ENCODE measurements at regions of chr15 and their contacts with region 1.

Region 1: GRCh38 chr15:65028921-65029735 is at the start of gene MTFMT:
- DNase-seq: peak; percentile 88 to 97
- ATAC-seq: peak; percentile 65 to 83
- H3K4me3 ChIP-seq: peak within 1 kb of the TSS; percentile 73
- H3K27ac ChIP-seq: peak within 1 kb of the TSS; percentile 93 to 96
- H3K4me1 ChIP-seq: peaks cover 32% of the 10 kb centered on the region
- CTCF ChIP-seq: peak; percentile 18; the same call in 1 of the 3 replicates
- EP300 ChIP-seq: no peak
- POLR2A ChIP-seq: peak; percentile 99
- RAD21 ChIP-seq: no peak
- polyA plus RNA-seq, gene MTFMT: 23.4 and 25.2 TPM in 2 replicates

Region 2: GRCh38 chr15:63718590-63719035 is 1310.5 kb before region 1 on chr15:
- CTCF ChIA-PET with region 1: no interaction called
- POLR2A ChIA-PET with region 1: no interaction called
- DNase-seq: peak in 1 of 2 experiments; percentile 59
- ATAC-seq: peak; percentile 70 to 87; a peak in 5 of 6 replicates
- H3K4me3 ChIP-seq: no peak overlapping the region
- H3K27ac ChIP-seq: peak overlapping the region in 1 of 2 experiments; percentile 10; a peak in 1 of 6 replicates
- H3K4me1 ChIP-seq: peaks cover 35% of the 10 kb centered on the region
- CTCF ChIP-seq: no peak
- EP300 ChIP-seq: peak; percentile 16 to 37; a peak in 1 of 5 replicates
- POLR2A ChIP-seq: no peak
- RAD21 ChIP-seq: no peak

Region 3: GRCh38 chr15:64825431-64826294 is 203.5 kb before region 1 on chr15 and contains the start of gene PIF1:
- CTCF ChIA-PET with region 1: no interaction called
- POLR2A ChIA-PET with region 1: no interaction called
- DNase-seq: peak; percentile 98 to 99
- ATAC-seq: peak; percentile 99
- H3K4me3 ChIP-seq: peak within 1 kb of the TSS; percentile 61
- H3K27ac ChIP-seq: peak within 1 kb of the TSS; percentile 74 to 91
- H3K4me1 ChIP-seq: peaks cover 9% of the 10 kb centered on the region
- CTCF ChIP-seq: no peak
- EP300 ChIP-seq: no peak
- POLR2A ChIP-seq: peak; percentile 84
- RAD21 ChIP-seq: no peak
- polyA plus RNA-seq, gene PIF1: 8.5 and 11.1 TPM in 2 replicates

Region 4: DNA sequence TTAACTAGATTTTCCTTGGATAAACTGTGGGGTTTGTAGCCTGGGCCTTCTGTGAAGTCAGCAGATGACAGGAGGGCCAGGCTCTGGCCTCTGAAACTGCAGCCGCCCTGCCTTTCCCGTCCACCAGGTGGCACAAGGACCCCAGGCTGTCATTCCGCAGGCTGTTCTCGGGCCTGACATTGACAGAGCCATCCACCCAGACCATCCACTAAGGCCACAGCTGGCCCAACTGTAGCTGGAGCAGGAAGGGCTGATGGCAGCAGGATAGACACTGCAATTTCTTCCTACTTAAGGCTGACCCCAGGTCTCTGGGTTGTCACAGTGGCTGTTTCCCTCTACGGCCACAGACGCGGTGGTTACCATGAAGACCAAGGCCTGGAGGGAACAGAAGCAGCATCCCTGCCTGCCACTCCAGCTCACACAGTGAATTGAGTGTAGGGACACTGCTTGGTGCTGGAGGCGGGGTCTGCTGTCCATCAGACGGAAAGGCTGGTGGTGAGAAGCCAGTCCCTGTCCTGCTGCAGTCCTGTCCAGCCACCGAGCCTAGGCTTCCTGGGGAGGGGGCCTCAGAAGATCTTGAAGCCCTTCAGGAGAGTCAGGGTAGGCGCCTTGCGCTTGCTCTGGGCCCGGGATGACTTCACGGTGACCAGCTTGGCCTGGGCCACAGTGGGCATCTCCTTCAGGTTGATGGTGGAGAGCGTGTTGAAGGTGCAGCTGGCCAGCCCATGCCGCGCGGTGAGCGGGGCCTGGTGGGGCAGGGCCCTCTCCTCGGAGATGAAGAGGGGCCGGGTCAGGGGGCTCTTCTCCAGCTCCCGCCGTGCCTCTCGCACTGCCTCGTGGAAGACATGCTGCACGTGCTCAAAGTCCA is 25.4 kb after region 1 on chr15:
- CTCF ChIA-PET with region 1: interaction called, 101 read pairs
- POLR2A ChIA-PET with region 1: no interaction called
- DNase-seq: peak; percentile 79 to 93
- ATAC-seq: peak; percentile 83 to 91
- H3K4me3 ChIP-seq: no peak overlapping the region
- H3K27ac ChIP-seq: peak overlapping the region; percentile 43 to 75
- H3K4me1 ChIP-seq: peaks cover 51% of the 10 kb centered on the region
- CTCF ChIP-seq: peak; percentile 94
- EP300 ChIP-seq: no peak
- POLR2A ChIP-seq: no peak
- RAD21 ChIP-seq: peak; percentile 95 to 98

Region 5: DNA sequence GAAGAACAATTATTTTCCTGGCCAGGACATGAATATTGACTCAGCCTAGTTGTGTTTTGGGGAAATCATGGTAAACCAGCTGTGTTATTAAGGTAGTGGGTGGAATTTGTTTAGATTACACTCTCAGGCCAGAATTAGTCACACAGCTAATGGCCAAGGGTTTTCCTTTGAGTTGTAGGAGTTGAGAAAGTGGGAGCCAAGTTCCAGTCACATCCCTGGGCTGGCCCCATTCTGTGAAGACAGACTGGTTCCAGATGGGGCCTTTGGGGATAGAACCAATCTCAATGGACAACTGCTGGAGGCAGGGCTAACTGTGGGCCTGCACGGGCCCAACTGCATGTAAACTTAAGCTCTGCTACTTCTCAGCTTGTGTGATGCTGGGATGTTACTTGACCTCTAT is 40.1 kb after region 1 on chr15:
- CTCF ChIA-PET with region 1: interaction called, 254 read pairs
- POLR2A ChIA-PET with region 1: no interaction called
- DNase-seq: no peak
- ATAC-seq: no peak
- H3K4me3 ChIP-seq: no peak overlapping the region
- H3K27ac ChIP-seq: no peak overlapping the region
- H3K4me1 ChIP-seq: peaks cover 5% of the 10 kb centered on the region; the same call in 2 of the 3 replicates
- CTCF ChIP-seq: no peak
- EP300 ChIP-seq: no peak
- POLR2A ChIP-seq: no peak
- RAD21 ChIP-seq: no peak

Region 6: DNA sequence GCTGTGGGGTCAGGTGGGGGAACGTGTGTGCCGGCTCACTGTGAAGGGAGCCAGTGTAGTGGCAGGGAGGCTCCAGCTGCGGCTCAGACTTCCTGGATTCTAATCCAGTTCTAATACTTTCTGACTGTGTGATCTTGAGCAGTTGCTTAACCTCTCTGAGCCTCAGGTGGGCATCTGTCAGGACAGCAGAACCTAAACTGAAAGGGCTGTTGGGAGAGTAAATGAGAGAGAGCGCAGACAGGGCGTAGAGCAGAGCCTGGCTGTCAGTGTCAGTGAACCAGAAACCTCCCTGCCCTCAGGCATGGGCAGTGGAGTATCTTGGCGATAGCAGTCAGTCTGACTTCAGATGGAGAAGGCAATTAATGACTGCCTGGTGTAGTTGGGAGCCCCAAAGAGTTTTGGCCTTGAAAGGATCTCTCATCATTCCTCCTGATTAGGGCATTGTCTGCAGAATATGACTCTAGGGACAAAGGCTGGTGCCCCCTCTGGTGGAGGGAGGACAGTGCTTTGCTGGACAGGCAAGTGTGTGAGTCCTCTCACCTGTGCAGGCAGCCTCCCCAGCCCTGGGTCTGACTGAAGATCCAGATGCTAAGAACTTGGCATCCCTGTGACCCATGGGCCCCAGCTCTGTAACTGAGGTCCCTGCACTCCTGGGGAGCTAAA is 57.0 kb after region 1 on chr15:
- CTCF ChIA-PET with region 1: interaction called, 254 read pairs
- POLR2A ChIA-PET with region 1: no interaction called
- DNase-seq: peak; percentile 64 to 71
- ATAC-seq: peak; percentile 68 to 83
- H3K4me3 ChIP-seq: no peak overlapping the region
- H3K27ac ChIP-seq: no peak overlapping the region
- H3K4me1 ChIP-seq: no peaks in the 10 kb centered on the region
- CTCF ChIP-seq: peak; percentile 56
- EP300 ChIP-seq: no peak
- POLR2A ChIP-seq: no peak
- RAD21 ChIP-seq: peak in 1 of 2 experiments; percentile 53; a peak in 3 of 5 replicates

Region 7: DNA sequence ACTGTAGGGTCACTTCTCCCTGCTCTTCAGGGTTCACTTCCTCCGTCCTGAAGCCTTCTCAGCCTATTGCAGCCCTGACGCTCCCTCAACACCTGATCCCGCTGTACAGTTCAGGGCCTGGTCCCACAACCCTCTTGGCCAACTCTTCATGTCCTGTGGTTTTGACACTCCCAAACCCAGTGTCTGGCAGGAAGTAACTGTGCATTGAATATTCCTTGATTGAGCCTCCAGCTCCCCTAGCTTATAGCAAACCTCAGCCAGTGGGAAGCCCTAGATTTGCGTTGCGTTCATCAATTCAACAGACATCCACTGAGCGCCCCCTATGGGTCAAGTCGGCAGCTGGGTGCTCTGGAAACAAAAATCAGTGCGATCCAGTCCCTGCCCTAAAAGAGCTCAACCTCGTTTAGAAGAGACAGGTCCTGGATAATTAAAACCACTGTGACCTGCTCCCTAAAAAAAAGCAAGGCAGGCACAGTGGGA is 72.3 kb after region 1 on chr15:
- CTCF ChIA-PET with region 1: interaction called, 25 read pairs
- POLR2A ChIA-PET with region 1: no interaction called
- DNase-seq: peak; percentile 65 to 68
- ATAC-seq: peak; percentile 49 to 84; a peak in 3 of 6 replicates
- H3K4me3 ChIP-seq: no peak overlapping the region
- H3K27ac ChIP-seq: no peak overlapping the region
- H3K4me1 ChIP-seq: no peaks in the 10 kb centered on the region
- CTCF ChIP-seq: peak; percentile 79
- EP300 ChIP-seq: no peak
- POLR2A ChIP-seq: no peak
- RAD21 ChIP-seq: peak; percentile 73 to 78

Region 8: GRCh38 chr15:65298731-65299130 is 269.6 kb after region 1 on chr15:
- CTCF ChIA-PET with region 1: interaction called, 14 read pairs
- POLR2A ChIA-PET with region 1: interaction called, 3 read pairs
- DNase-seq: no peak
- ATAC-seq: no peak
- H3K4me3 ChIP-seq: no peak overlapping the region
- H3K27ac ChIP-seq: no peak overlapping the region
- H3K4me1 ChIP-seq: peaks cover 23% of the 10 kb centered on the region
- CTCF ChIP-seq: no peak
- EP300 ChIP-seq: no peak
- POLR2A ChIP-seq: no peak
- RAD21 ChIP-seq: no peak